Activated naive CD8-positive, alpha-beta T cell treated with anti-CD3 and anti-CD28 coated beads, Interleukin-2, amount 10 ng/mL, durations not matched to agents 7 days and 5 days (primary cell): ENCODE measurements at regions of chr16 and their contacts with region 1.

Region 1: GRCh38 chr16:1420111-1420540 is 421 bp downstream of the UQCC4 start:
- DNase-seq: no peak
- ATAC-seq: peak; percentile 0
- H3K4me3 Mint-ChIP-seq: peak overlapping the region; percentile 86
- H3K27ac Mint-ChIP-seq: peak overlapping the region; percentile 98
- H3K4me1 Mint-ChIP-seq: peaks cover 15% of the 10 kb centered on the region
- H3K27me3 Mint-ChIP-seq: no peaks in the 10 kb centered on the region

Region 2: GRCh38 chr16:1308977-1309885 is 110.9 kb before region 1 on chr16 and contains the start of gene UBE2I:
- POLR2A ChIA-PET with region 1: interaction called, 13 read pairs
- DNase-seq: peak; percentile 99
- ATAC-seq: peak; percentile 62
- H3K4me3 Mint-ChIP-seq: peak within 1 kb of the TSS; percentile 100
- H3K27ac Mint-ChIP-seq: peak within 1 kb of the TSS; percentile 99
- H3K4me1 Mint-ChIP-seq: peaks cover 33% of the 10 kb centered on the region
- H3K27me3 Mint-ChIP-seq: no peaks in the 10 kb centered on the region
- total RNA-seq, gene UBE2I: 211 to 232 TPM

Region 3: GRCh38 chr16:1430759-1431496 is 10.8 kb after region 1 on chr16 and contains the start of gene PERCC1:
- POLR2A ChIA-PET with region 1: interaction called, 18 read pairs
- DNase-seq: no peak
- ATAC-seq: no peak
- H3K4me3 Mint-ChIP-seq: peak within 1 kb of the TSS; percentile 71
- H3K27ac Mint-ChIP-seq: peak within 1 kb of the TSS; percentile 85
- H3K4me1 Mint-ChIP-seq: no peaks in the 10 kb centered on the region
- H3K27me3 Mint-ChIP-seq: no peaks in the 10 kb centered on the region
- total RNA-seq, gene PERCC1: 0.57 to 1.2 TPM

Region 4: DNA sequence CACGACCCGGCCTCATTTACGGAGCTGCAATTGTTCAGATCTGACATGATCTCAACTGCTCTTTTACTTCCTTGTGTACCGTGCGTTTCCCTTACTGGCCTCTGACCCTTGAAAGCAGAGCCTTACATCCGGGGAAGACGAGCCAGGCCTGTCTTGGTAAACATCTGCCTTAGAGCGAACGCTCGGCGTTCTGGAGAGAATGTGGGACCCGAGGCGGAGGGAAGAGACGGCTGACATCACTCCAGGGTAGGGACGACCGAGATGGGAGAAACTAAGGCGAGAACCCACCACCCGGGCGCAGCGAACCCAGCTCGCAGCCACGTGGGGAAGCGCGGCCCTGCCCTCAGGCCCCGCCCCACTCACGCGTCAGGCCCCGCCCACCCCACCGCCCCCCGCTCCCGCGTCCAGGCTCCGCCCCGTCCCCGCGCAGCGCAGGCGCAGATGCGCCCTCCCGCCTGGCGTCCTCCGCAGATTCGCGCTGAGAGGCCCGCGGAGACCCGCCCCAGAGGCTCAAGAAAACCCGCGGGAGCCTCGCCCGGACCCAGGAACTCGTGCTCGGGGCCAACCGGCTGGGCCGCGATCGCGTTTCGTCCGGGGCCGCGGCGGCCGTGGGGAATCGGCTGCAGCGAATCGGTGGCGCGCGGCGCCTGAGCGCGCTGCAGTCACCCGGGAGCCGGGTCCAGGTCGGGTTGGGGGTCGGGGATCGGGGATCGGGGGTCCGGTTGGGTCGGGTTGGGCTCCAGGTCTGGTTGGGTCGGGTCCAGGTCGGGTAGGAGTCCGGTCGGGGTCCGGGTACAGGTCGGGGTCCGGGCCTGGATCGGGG is 73.0 kb after region 1 on chr16 and contains the start of gene TELO2:
- POLR2A ChIA-PET with region 1: interaction called, 26 read pairs
- DNase-seq: peak; percentile 95
- ATAC-seq: peak; percentile 86
- H3K4me3 Mint-ChIP-seq: peak within 1 kb of the TSS; percentile 94
- H3K27ac Mint-ChIP-seq: peak within 1 kb of the TSS; percentile 98
- H3K4me1 Mint-ChIP-seq: peaks cover 8% of the 10 kb centered on the region
- H3K27me3 Mint-ChIP-seq: no peaks in the 10 kb centered on the region
- total RNA-seq, gene TELO2: 53.9 to 57.1 TPM